CD8-positive, alpha-beta T cell (primary cell): ENCODE measurements at regions of chr20 and their contacts with region 1.

Region 1: GRCh38 chr20:45934586-45935415 is at the start of gene PCIF1:
- DNase-seq: peak; percentile 97 to 100 (median 98)
- ATAC-seq: peak; percentile 79
- H3K4me3 ChIP-seq: peak within 1 kb of the TSS; percentile 95 to 99
- H3K4me3 Mint-ChIP-seq: peak within 1 kb of the TSS; percentile 83
- H3K27ac ChIP-seq: peak within 1 kb of the TSS; percentile 94 to 98
- H3K27ac Mint-ChIP-seq: peak within 1 kb of the TSS; percentile 98
- H3K4me1 ChIP-seq: peaks cover 11% of the 10 kb centered on the region
- H3K4me1 Mint-ChIP-seq: peaks cover 29% of the 10 kb centered on the region
- H3K27me3 ChIP-seq: no peaks in the 10 kb centered on the region
- H3K27me3 Mint-ChIP-seq: no peaks in the 10 kb centered on the region
- CTCF ChIP-seq: no peak
- total RNA-seq, gene PCIF1: 112 to 118 TPM

Region 2: GRCh38 chr20:45362804-45363610 is 571.8 kb before region 1 on chr20 and contains the start of gene SYS1:
- CTCF ChIA-PET with region 1: no interaction called
- POLR2A ChIA-PET with region 1: no interaction called
- intact Hi-C with region 1: loop called in 1 of 2 experiments (anchors 10 kb)
- DNase-seq: peak; percentile 97 to 99 (median 99)
- ATAC-seq: peak; percentile 86
- H3K4me3 ChIP-seq: peak within 1 kb of the TSS; percentile 91 to 99
- H3K4me3 Mint-ChIP-seq: peak within 1 kb of the TSS; percentile 100
- H3K27ac ChIP-seq: peak within 1 kb of the TSS; percentile 92 to 100
- H3K27ac Mint-ChIP-seq: peak within 1 kb of the TSS; percentile 100
- H3K4me1 ChIP-seq: peaks cover 33% of the 10 kb centered on the region
- H3K4me1 Mint-ChIP-seq: peaks cover 49% of the 10 kb centered on the region
- H3K27me3 ChIP-seq: no peaks in the 10 kb centered on the region
- H3K27me3 Mint-ChIP-seq: no peaks in the 10 kb centered on the region
- CTCF ChIP-seq: peak; percentile 89
- total RNA-seq, gene SYS1: 111 to 116 TPM

Region 3: DNA sequence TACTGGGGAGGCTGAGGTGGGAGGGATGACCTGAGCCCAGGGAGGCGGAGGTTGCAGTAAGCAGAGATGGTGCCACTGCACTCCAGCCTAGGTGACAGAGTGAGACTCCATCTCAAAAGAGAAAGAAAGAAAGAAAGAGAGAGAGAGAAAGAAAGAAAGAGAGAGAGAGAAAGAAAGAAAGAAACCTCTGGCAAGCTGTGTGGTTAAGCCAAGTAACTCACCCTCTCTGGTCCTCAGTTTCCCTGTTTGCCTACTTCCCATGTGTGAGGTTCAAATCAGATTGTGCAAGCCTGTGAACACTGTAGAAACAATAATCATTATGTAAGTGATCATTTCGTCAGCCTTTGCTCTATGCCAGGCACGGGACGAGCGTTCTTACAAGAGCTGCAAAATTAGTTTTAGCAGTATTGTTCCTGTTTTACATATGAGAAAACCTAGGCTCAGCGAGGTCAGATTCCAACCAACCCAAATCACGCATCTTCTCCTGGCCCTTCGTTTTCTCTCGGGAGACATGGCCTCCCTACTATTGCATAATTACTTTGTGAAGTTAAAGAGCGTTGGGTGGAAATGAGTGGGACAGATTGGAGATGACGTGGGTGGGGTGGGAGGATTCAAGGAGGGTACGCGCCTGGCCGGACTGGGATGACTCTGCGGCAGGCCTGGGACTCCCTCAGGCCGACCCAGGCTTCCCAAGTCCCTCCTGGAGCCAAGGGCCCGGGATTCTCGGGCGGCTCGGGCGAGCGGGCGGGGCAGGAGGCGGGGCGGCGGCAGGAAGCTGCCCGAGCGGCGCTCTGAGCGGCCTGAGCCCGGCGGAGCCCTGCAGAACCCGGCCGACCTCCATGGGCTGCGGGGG is 101.5 kb before region 1 on chr20 and contains the start of gene SNX21:
- CTCF ChIA-PET with region 1: interaction called, 3 read pairs
- POLR2A ChIA-PET with region 1: interaction called, 10 read pairs
- intact Hi-C with region 1: no loop called
- DNase-seq: peak in 7 of 9 experiments; percentile 6 to 61 (median 26)
- ATAC-seq: peak; percentile 73
- H3K4me3 ChIP-seq: peak within 1 kb of the TSS; percentile 64 to 73
- H3K4me3 Mint-ChIP-seq: peak within 1 kb of the TSS; percentile 86
- H3K27ac ChIP-seq: no peak within 1 kb of the TSS
- H3K27ac Mint-ChIP-seq: no peak within 1 kb of the TSS
- H3K4me1 ChIP-seq: peaks cover 7% of the 10 kb centered on the region
- H3K4me1 Mint-ChIP-seq: peaks cover 17% of the 10 kb centered on the region
- H3K27me3 ChIP-seq: no peaks in the 10 kb centered on the region
- H3K27me3 Mint-ChIP-seq: no peaks in the 10 kb centered on the region
- CTCF ChIP-seq: no peak
- total RNA-seq, gene SNX21: 0.46 to 0.50 TPM

Region 4: GRCh38 chr20:45890985-45891983 is 43.5 kb before region 1 on chr20 and contains the starts of genes CTSA and NEURL2:
- CTCF ChIA-PET with region 1: interaction called, 6 read pairs
- POLR2A ChIA-PET with region 1: interaction called, 52 read pairs
- intact Hi-C with region 1: loop called (anchors 1 kb)
- DNase-seq: peak; percentile 53 to 91 (median 84)
- ATAC-seq: peak; percentile 70
- H3K4me3 ChIP-seq: peak within 1 kb of the TSS; percentile 89 to 99
- H3K4me3 Mint-ChIP-seq: peak within 1 kb of the TSS; percentile 93
- H3K27ac ChIP-seq: peak within 1 kb of the TSS; percentile 46 to 60
- H3K27ac Mint-ChIP-seq: peak within 1 kb of the TSS; percentile 90
- H3K4me1 ChIP-seq: peaks cover 24% of the 10 kb centered on the region
- H3K4me1 Mint-ChIP-seq: peaks cover 35% of the 10 kb centered on the region
- H3K27me3 ChIP-seq: no peaks in the 10 kb centered on the region
- H3K27me3 Mint-ChIP-seq: no peaks in the 10 kb centered on the region
- CTCF ChIP-seq: no peak
- total RNA-seq, gene CTSA: 52.8 to 64.2 TPM
- total RNA-seq, gene NEURL2: 1.6 to 1.7 TPM

Region 5: GRCh38 chr20:45946149-45946970 is 11.6 kb after region 1 on chr20:
- CTCF ChIA-PET with region 1: interaction called, 6 read pairs
- POLR2A ChIA-PET with region 1: interaction called, 34 read pairs
- intact Hi-C with region 1: no loop called
- DNase-seq: peak in 7 of 9 experiments; percentile 37 to 84 (median 64)
- ATAC-seq: peak; percentile 47
- H3K4me3 ChIP-seq: no peak overlapping the region
- H3K4me3 Mint-ChIP-seq: no peak overlapping the region
- H3K27ac ChIP-seq: peak overlapping the region in 1 of 2 experiments; percentile 75
- H3K27ac Mint-ChIP-seq: peak overlapping the region; percentile 78
- H3K4me1 ChIP-seq: peaks cover 8% of the 10 kb centered on the region
- H3K4me1 Mint-ChIP-seq: peaks cover 5% of the 10 kb centered on the region
- H3K27me3 ChIP-seq: no peaks in the 10 kb centered on the region
- H3K27me3 Mint-ChIP-seq: no peaks in the 10 kb centered on the region
- CTCF ChIP-seq: no peak

Region 6: DNA sequence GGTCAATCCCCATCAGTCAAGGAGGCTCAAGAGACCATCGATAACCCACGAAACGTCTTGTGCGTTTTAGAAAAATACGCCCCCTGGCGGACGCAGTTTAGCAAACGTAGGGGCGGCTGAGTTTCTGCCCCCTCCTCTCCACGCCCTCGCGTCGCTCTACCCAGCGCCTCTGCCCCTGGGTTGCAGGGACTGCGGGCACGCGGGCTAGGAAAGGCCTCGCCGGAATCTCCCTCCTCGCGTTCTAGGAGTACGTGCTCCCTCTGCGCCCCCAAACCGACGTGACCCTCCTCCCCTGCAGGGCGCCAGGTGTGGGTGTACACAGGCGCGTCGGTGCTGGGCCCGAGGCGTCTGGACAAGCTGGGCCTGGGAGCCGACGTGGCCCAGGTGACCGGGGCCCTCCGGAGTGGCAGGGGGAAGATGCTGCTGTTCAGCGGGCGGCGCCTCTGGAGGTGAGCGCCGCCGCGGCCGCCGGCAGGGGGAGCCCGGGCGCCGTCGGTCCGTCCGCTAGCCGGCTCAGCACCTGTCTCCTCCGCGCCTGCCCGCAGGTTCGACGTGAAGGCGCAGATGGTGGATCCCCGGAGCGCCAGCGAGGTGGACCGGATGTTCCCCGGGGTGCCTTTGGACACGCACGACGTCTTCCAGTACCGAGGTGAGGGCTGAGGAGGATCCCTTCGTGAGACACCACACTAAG is 79.2 kb after region 1 on chr20:
- CTCF ChIA-PET with region 1: interaction called, 4 read pairs
- POLR2A ChIA-PET with region 1: no interaction called
- intact Hi-C with region 1: loop called in 1 of 2 experiments (anchors 5 kb)
- DNase-seq: peak; percentile 44 to 85 (median 73)
- ATAC-seq: peak; percentile 60
- H3K4me3 ChIP-seq: peak overlapping the region; percentile 22 to 34
- H3K4me3 Mint-ChIP-seq: peak overlapping the region; percentile 15
- H3K27ac ChIP-seq: no peak overlapping the region
- H3K27ac Mint-ChIP-seq: no peak overlapping the region
- H3K4me1 ChIP-seq: peaks cover 40% of the 10 kb centered on the region
- H3K4me1 Mint-ChIP-seq: peaks cover 46% of the 10 kb centered on the region
- H3K27me3 ChIP-seq: peaks cover 34 to 44% of the 10 kb centered on the region in 2 experiments
- H3K27me3 Mint-ChIP-seq: peaks cover 76% of the 10 kb centered on the region
- CTCF ChIP-seq: peak; percentile 94